ENCODE measurements at regions of chr3 and their contacts with region 1.

Region 1: GRCh38 chr3:87082796-87083440 is 92.0 kb upstream of the VGLL3 start:
- DNase-seq: no peak
- ATAC-seq: peak; percentile 85
- H3K4me3 ChIP-seq: no peak overlapping the region
- H3K27ac ChIP-seq: no peak overlapping the region
- H3K4me1 ChIP-seq: no peaks in the 10 kb centered on the region
- H3K27me3 ChIP-seq: no peaks in the 10 kb centered on the region
- CTCF ChIP-seq: peak; percentile 46 to 61 (median 50); a peak in 5 of 6 replicates
- EP300 ChIP-seq: no peak
- POLR2A ChIP-seq: no peak
- RAD21 ChIP-seq: peak; percentile 59

Region 2: DNA sequence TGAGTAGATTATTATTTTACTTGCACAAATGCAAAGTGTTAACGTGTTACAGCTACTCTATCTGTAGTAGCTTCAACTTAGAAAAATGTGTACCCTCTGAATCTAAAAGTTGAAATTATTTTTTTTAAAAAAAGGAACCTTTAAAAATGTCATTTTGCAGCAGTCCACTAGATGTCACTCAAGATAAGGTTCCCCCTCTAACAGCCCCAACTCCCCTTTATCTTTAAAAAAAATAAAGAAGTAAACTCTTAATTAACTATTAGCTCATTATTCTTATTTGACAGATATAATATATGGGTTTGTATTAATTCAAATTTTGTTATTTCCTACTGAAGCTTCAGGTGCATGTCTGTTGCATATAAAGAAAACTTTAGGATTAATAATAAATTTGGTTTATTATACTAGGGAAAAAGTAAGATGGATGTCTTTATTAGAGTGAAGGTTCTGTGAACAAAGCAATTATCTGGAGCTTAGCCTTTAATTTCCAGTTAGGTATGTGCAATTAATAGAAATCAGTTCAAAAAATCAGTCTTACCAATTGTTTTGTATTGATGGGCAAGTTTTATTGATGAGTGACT is 380.4 kb before region 1 on chr3:
- CTCF ChIA-PET with region 1: interaction called, 3 read pairs
- POLR2A ChIA-PET with region 1: no interaction called
- RAD21 ChIA-PET with region 1: no interaction called
- SMC1A ChIA-PET with region 1: interaction called, 4 read pairs
- in situ Hi-C with region 1: no loop called
- intact Hi-C with region 1: loop called (anchors 10 kb)
- DNase-seq: no peak
- ATAC-seq: peak; percentile 23; the same call in 1 of the 3 replicates
- H3K4me3 ChIP-seq: no peak overlapping the region
- H3K27ac ChIP-seq: no peak overlapping the region
- H3K4me1 ChIP-seq: no peaks in the 10 kb centered on the region
- H3K27me3 ChIP-seq: no peaks in the 10 kb centered on the region
- CTCF ChIP-seq: peak; percentile 40 to 44 (median 41); a peak in 4 of 6 replicates
- EP300 ChIP-seq: no peak
- POLR2A ChIP-seq: no peak
- RAD21 ChIP-seq: peak; percentile 35; the same call in 1 of the 2 replicates

Region 3: DNA sequence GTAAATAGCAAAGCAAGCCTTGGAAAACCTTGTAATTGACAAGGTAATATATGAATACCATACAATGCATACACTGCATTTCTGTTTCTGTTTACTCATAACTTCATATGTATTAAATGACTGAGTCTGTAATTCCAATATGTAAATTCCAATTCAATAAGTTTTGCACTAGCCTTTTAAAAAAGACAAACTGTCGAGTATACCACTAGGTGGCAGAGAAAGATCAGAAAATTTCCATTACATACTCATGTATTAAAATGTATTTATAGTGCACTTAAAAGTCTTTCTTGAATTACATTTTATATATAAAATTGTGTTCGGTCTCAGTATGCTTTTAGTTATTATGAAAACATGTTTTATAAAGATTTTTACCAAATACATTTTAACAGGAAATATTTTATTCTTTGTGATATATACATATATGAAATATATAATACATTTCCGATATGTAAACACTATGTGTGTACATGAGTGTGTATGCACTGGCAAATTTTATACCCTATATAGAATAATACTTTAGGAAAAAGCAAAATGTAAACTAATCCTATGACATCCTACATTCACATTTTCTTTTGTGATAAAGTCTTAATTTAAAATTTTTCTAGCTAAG is 308.7 kb before region 1 on chr3:
- CTCF ChIA-PET with region 1: interaction called, 4 read pairs
- POLR2A ChIA-PET with region 1: no interaction called
- RAD21 ChIA-PET with region 1: no interaction called
- SMC1A ChIA-PET with region 1: interaction called, 3 read pairs
- in situ Hi-C with region 1: no loop called
- intact Hi-C with region 1: loop called (anchors 2 kb)
- DNase-seq: no peak
- ATAC-seq: peak; percentile 39; the same call in 1 of the 3 replicates
- H3K4me3 ChIP-seq: no peak overlapping the region
- H3K27ac ChIP-seq: no peak overlapping the region
- H3K4me1 ChIP-seq: no peaks in the 10 kb centered on the region
- H3K27me3 ChIP-seq: no peaks in the 10 kb centered on the region; a peak in 1 of 4 replicates
- CTCF ChIP-seq: peak in 2 of 3 experiments; percentile 16 to 26; a peak in 2 of 6 replicates
- EP300 ChIP-seq: no peak
- POLR2A ChIP-seq: no peak
- RAD21 ChIP-seq: peak; percentile 28; the same call in 1 of the 2 replicates

Region 4: GRCh38 chr3:86785386-86785785 is 297.5 kb before region 1 on chr3:
- CTCF ChIA-PET with region 1: no interaction called
- POLR2A ChIA-PET with region 1: no interaction called
- RAD21 ChIA-PET with region 1: no interaction called
- SMC1A ChIA-PET with region 1: no interaction called
- in situ Hi-C with region 1: loop called (anchors 10 kb)
- intact Hi-C with region 1: no loop called
- DNase-seq: no peak
- ATAC-seq: no peak
- H3K4me3 ChIP-seq: no peak overlapping the region
- H3K27ac ChIP-seq: no peak overlapping the region
- H3K4me1 ChIP-seq: no peaks in the 10 kb centered on the region
- H3K27me3 ChIP-seq: no peaks in the 10 kb centered on the region
- CTCF ChIP-seq: no peak
- EP300 ChIP-seq: no peak
- POLR2A ChIP-seq: no peak
- RAD21 ChIP-seq: no peak

Region 5: GRCh38 chr3:86969500-86970189 is 113.3 kb before region 1 on chr3:
- CTCF ChIA-PET with region 1: interaction called, 8 read pairs
- POLR2A ChIA-PET with region 1: no interaction called
- RAD21 ChIA-PET with region 1: interaction called, 4 read pairs
- SMC1A ChIA-PET with region 1: no interaction called
- in situ Hi-C with region 1: no loop called
- intact Hi-C with region 1: loop called (anchors 1 kb)
- DNase-seq: no peak
- ATAC-seq: peak; percentile 80
- H3K4me3 ChIP-seq: no peak overlapping the region
- H3K27ac ChIP-seq: no peak overlapping the region
- H3K4me1 ChIP-seq: no peaks in the 10 kb centered on the region
- H3K27me3 ChIP-seq: no peaks in the 10 kb centered on the region
- CTCF ChIP-seq: peak; percentile 66 to 79 (median 72)
- EP300 ChIP-seq: no peak
- POLR2A ChIP-seq: no peak
- RAD21 ChIP-seq: peak; percentile 62

Measured in GM12878 (cell line).